CD4-positive, alpha-beta T cell (primary cell): ENCODE measurements at regions of chr2 and their contacts with region 1.

Region 1: GRCh38 chr2:2744958-2745715 is 414.1 kb upstream of the MYT1L start:
- DNase-seq: no peak
- ATAC-seq: no peak
- H3K4me3 ChIP-seq: no peak overlapping the region
- H3K4me3 Mint-ChIP-seq: no peak overlapping the region
- H3K27ac ChIP-seq: no peak overlapping the region
- H3K27ac Mint-ChIP-seq: no peak overlapping the region
- H3K4me1 ChIP-seq: no peaks in the 10 kb centered on the region
- H3K4me1 Mint-ChIP-seq: no peaks in the 10 kb centered on the region
- H3K27me3 ChIP-seq: no peaks in the 10 kb centered on the region
- H3K27me3 Mint-ChIP-seq: peaks cover 4% of the 10 kb centered on the region
- CTCF ChIP-seq: no peak

Region 2: GRCh38 chr2:2698182-2699120 is 46.7 kb before region 1 on chr2:
- CTCF ChIA-PET with region 1: no interaction called
- POLR2A ChIA-PET with region 1: no interaction called
- intact Hi-C with region 1: no loop called
- DNase-seq: peak in 2 of 14 experiments; percentile 35 to 38
- ATAC-seq: peak; percentile 49
- H3K4me3 ChIP-seq: no peak overlapping the region
- H3K4me3 Mint-ChIP-seq: no peak overlapping the region
- H3K27ac ChIP-seq: no peak overlapping the region
- H3K27ac Mint-ChIP-seq: no peak overlapping the region
- H3K4me1 ChIP-seq: no peaks in the 10 kb centered on the region
- H3K4me1 Mint-ChIP-seq: no peaks in the 10 kb centered on the region
- H3K27me3 ChIP-seq: no peaks in the 10 kb centered on the region
- H3K27me3 Mint-ChIP-seq: no peaks in the 10 kb centered on the region
- CTCF ChIP-seq: no peak

Region 3: GRCh38 chr2:2727876-2728511 is 17.1 kb before region 1 on chr2:
- CTCF ChIA-PET with region 1: no interaction called
- POLR2A ChIA-PET with region 1: no interaction called
- intact Hi-C with region 1: loop called in 1 of 2 experiments (anchors 1 kb)
- DNase-seq: no peak
- ATAC-seq: no peak
- H3K4me3 ChIP-seq: no peak overlapping the region
- H3K4me3 Mint-ChIP-seq: no peak overlapping the region
- H3K27ac ChIP-seq: no peak overlapping the region
- H3K27ac Mint-ChIP-seq: no peak overlapping the region
- H3K4me1 ChIP-seq: no peaks in the 10 kb centered on the region
- H3K4me1 Mint-ChIP-seq: no peaks in the 10 kb centered on the region
- H3K27me3 ChIP-seq: no peaks in the 10 kb centered on the region
- H3K27me3 Mint-ChIP-seq: no peaks in the 10 kb centered on the region
- CTCF ChIP-seq: no peak

Region 4: GRCh38 chr2:2769481-2770431 is 24.6 kb after region 1 on chr2:
- CTCF ChIA-PET with region 1: no interaction called
- POLR2A ChIA-PET with region 1: no interaction called
- intact Hi-C with region 1: no loop called
- DNase-seq: no peak
- ATAC-seq: no peak
- H3K4me3 ChIP-seq: no peak overlapping the region
- H3K4me3 Mint-ChIP-seq: no peak overlapping the region
- H3K27ac ChIP-seq: no peak overlapping the region
- H3K27ac Mint-ChIP-seq: no peak overlapping the region
- H3K4me1 ChIP-seq: no peaks in the 10 kb centered on the region
- H3K4me1 Mint-ChIP-seq: no peaks in the 10 kb centered on the region
- H3K27me3 ChIP-seq: no peaks in the 10 kb centered on the region
- H3K27me3 Mint-ChIP-seq: no peaks in the 10 kb centered on the region
- CTCF ChIP-seq: no peak

Region 5: DNA sequence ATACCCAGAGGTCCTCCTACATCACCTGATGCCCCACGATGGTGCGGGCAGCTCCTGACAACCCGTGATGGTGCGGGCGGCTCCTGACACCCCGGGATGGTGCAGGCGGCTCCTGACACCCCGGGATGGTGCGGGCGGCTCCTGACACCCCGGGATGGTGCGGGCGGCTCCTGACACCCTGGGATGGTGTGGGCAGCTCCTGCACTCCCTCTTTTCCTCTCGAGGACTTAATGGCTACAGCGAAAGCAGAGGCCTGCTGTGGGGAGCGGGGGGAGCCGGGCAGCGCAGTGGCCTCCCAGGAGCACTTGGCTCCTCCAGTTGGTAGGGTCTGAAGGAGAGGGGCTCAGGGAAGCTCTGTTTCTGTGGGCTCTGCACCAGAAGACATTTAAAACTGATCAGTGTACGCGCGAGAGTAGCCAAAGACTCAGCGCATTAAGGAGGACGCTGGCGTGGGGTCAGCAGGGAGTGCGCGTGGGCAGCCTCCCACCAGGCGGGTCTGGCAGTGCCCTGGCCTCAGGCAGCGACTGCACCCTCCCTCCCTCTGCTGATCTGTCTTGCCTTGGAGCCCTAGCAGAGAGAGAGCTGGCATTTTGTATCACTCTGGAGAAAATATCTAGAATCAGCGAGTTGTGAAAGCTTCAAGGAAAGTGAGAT is 50.4 kb after region 1 on chr2:
- CTCF ChIA-PET with region 1: no interaction called
- POLR2A ChIA-PET with region 1: no interaction called
- intact Hi-C with region 1: no loop called
- DNase-seq: no peak
- ATAC-seq: no peak
- H3K4me3 ChIP-seq: no peak overlapping the region
- H3K4me3 Mint-ChIP-seq: no peak overlapping the region
- H3K27ac ChIP-seq: no peak overlapping the region
- H3K27ac Mint-ChIP-seq: no peak overlapping the region
- H3K4me1 ChIP-seq: no peaks in the 10 kb centered on the region
- H3K4me1 Mint-ChIP-seq: no peaks in the 10 kb centered on the region
- H3K27me3 ChIP-seq: no peaks in the 10 kb centered on the region
- H3K27me3 Mint-ChIP-seq: peaks cover 17% of the 10 kb centered on the region
- CTCF ChIP-seq: no peak